Posterior cingulate gyrus (tissue), 11 donors: ENCODE measurements at regions of chr22 and their contacts with region 1.

Region 1: GRCh38 chr22:35299673-35300497 is at the start of gene TOM1:
- DNase-seq: peak; percentile 93 to 99 (median 95)

Region 2: DNA sequence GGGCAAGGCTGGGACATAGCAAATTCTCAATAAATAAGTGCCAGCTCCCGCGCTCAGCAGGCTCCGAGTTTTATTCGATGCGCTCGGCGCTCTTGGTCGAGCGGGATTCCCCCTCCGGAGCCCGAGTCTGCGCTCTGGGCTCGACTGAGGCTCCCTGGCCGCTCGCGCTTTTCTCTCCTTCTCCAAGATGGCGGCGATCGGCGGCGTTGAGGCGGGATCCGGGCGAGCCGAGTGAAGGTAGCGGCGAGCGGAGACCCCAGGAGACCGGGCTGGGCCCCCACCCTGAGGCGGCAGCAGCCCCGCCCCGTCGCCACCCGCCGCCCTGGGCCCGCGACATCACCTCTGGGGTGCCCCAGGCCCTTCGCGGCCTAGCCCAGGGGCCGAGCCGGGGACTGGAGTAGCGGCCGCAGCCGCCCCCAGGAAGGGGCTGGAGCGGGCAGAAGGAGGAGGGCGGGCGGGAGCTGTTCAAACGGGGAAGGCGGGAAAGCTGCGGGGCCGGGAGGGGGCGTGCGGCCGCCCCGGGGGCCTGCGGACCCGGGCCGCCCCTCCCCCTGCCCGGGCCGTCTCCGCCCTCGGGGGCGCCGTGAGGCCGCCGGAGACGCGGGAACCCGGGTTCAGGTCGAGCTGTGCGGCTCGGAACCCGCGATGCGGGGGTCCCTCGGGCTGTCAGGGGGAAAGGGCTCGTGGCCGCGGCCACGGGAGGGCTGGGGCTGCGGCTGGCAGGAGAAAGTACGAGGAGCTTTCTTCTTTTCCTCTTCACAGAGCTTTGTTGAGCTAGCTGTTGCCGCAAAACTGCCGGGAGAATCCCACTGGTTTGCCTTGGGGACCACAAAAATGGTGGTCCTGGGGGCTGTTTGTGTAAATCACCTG is 42.3 kb before region 1 on chr22 and contains the start of gene HMGXB4:
- intact Hi-C with region 1: loop called (anchors 5 kb)
- DNase-seq: peak; percentile 81 to 98 (median 87)

Region 3: DNA sequence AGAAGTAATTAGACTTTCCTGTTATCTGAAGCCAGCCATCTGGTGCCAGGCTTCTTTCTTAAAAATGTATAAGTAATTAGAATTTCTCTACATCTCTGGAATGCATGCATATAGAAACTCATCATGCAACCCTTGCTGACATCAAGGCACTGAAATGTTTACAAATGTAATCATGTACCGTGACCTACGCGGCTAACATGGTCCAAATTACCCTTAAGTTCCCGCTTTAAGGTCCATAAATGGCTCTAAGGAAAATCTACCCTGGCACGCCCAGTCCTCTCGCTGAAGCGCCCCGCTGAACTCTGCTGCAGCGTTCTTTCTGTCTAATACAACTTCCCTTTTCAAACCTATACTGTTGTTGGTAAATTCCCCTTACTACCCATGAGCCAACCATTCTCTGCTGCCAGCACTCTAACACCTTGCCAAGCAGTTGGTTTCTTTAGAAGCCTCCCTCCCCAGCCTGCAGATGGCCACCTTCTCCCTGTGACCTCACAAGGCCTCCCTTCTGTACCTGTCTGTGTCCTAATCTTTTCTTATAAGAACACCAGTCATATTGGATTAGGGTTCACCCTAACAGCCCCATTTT is 67.5 kb after region 1 on chr22:
- intact Hi-C with region 1: no loop called
- DNase-seq: peak in 1 of 10 donors; percentile 30